ENCODE measurements at regions of chr16 and their contacts with region 1.

Region 1: GRCh38 chr16:67667817-67668494 is 1.3 kb downstream of the C16orf86 start:
- DNase-seq: peak; percentile 89
- ATAC-seq: peak; percentile 81
- H3K4me3 ChIP-seq: peak overlapping the region in 4 of 5 experiments; percentile 67 to 91 (median 80)
- H3K4me3 Mint-ChIP-seq: peak overlapping the region; percentile 91
- H3K27ac ChIP-seq: peak overlapping the region; percentile 77 to 86
- H3K27ac Mint-ChIP-seq: peak overlapping the region; percentile 84
- H3K4me1 ChIP-seq: peaks cover 36 to 49% of the 10 kb centered on the region in 2 donors
- H3K4me1 Mint-ChIP-seq: peaks cover 49% of the 10 kb centered on the region
- H3K27me3 ChIP-seq: no peaks in the 10 kb centered on the region
- H3K27me3 Mint-ChIP-seq: no peaks in the 10 kb centered on the region
- CTCF ChIP-seq: peak; percentile 75

Region 2: GRCh38 chr16:67146523-67147357 is 521.2 kb before region 1 on chr16:
- CTCF ChIA-PET with region 1: no interaction called
- POLR2A ChIA-PET with region 1: no interaction called
- intact Hi-C with region 1: no loop called
- DNase-seq: no peak
- ATAC-seq: no peak
- H3K4me3 ChIP-seq: no peak overlapping the region
- H3K4me3 Mint-ChIP-seq: no peak overlapping the region
- H3K27ac ChIP-seq: no peak overlapping the region
- H3K27ac Mint-ChIP-seq: no peak overlapping the region
- H3K4me1 ChIP-seq: peaks cover 10 to 14% of the 10 kb centered on the region in 2 donors
- H3K4me1 Mint-ChIP-seq: peaks cover 12% of the 10 kb centered on the region
- H3K27me3 ChIP-seq: peaks cover 0 to 27% (median 10%) of the 10 kb centered on the region in 4 experiments
- H3K27me3 Mint-ChIP-seq: peaks cover 20% of the 10 kb centered on the region
- CTCF ChIP-seq: no peak

Region 3: DNA sequence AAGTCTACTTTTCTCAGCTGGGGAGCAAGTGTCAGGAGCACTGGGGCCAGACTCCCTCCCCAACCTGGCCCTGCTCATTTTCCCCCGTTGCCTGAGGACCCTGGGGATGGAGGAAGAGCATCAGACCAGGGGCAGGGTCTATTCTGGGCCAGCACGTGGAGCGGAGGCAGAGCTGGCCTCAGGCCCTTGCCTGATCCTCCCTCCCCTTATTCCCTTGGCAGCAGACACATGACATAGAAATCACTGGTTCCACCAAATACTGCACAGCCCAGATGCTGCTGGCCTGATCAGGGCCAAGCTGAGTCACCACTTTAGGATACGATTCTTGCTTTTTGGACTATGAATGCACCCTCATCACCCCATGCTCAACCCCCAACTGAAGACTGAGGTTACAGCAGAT is 168.8 kb before region 1 on chr16:
- CTCF ChIA-PET with region 1: interaction called, 16 read pairs
- POLR2A ChIA-PET with region 1: no interaction called
- intact Hi-C with region 1: loop called (anchors 1 kb)
- DNase-seq: no peak
- ATAC-seq: no peak
- H3K4me3 ChIP-seq: no peak overlapping the region
- H3K4me3 Mint-ChIP-seq: no peak overlapping the region
- H3K27ac ChIP-seq: no peak overlapping the region
- H3K27ac Mint-ChIP-seq: peak overlapping the region; percentile 70
- H3K4me1 ChIP-seq: peaks cover 13 to 17% of the 10 kb centered on the region in 2 donors
- H3K4me1 Mint-ChIP-seq: peaks cover 29% of the 10 kb centered on the region
- H3K27me3 ChIP-seq: no peaks in the 10 kb centered on the region
- H3K27me3 Mint-ChIP-seq: no peaks in the 10 kb centered on the region
- CTCF ChIP-seq: no peak

Region 4: DNA sequence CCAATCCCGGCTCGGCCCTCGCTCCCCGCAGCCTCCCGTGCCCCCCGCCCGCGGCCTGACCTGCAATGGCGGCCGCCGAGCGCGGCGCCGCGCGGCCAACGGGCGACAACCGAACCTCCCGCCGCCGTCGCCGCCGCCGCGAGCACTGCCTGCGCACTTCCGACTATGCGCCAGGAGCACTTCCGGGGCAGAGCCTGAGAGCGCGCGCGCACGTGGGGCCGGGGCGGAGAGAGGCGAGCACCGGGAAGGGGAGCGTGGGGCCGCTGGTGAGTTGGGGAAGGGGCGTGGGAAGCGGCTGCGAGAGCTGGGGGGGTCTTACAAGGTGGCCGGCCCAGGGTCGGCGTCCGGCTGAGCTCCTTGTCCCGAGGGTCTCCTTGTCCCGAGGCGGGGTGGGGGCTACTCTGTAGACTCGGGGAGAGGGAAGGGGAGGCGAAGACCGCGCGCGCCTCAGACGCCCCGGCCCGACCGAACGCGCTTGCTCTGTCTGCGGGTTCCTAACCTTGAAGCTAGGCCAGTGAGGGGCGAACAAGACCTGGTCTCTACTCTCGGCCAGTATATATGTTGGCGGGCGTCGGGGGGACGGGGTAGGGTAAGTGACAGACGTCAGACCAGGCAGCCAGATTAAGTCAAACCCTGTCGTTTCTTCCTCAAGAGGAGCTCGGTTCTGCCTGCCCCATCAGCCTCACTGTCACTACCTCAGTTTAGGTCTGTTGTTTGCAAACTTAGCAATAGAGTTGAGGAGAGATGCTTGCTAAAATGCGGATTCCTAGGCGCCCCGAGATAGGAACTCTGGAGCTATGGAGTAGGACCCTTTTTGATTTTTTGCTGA is 1464.7 kb after region 1 on chr16 and contains the starts of genes CHTF8 and UTP4:
- CTCF ChIA-PET with region 1: no interaction called
- POLR2A ChIA-PET with region 1: no interaction called
- intact Hi-C with region 1: loop called (anchors 10 kb)
- DNase-seq: peak; percentile 92
- ATAC-seq: peak; percentile 87
- H3K4me3 ChIP-seq: peak within 1 kb of the TSS; percentile 87 to 96 (median 89)
- H3K4me3 Mint-ChIP-seq: peak within 1 kb of the TSS; percentile 95
- H3K27ac ChIP-seq: peak within 1 kb of the TSS; percentile 66 to 90
- H3K27ac Mint-ChIP-seq: peak within 1 kb of the TSS; percentile 91
- H3K4me1 ChIP-seq: peaks cover 16 to 19% of the 10 kb centered on the region in 2 donors
- H3K4me1 Mint-ChIP-seq: peaks cover 41% of the 10 kb centered on the region
- H3K27me3 ChIP-seq: no peaks in the 10 kb centered on the region
- H3K27me3 Mint-ChIP-seq: no peaks in the 10 kb centered on the region
- CTCF ChIP-seq: no peak
- total RNA-seq, gene CHTF8: 112 and 118 TPM in 2 replicates
- total RNA-seq, gene UTP4: 29.4 and 30.1 TPM in 2 replicates

Measured in B cell (primary cell).